Cardiac septum (tissue), 1 donor: ENCODE measurements at regions of chr18 and their contacts with region 1.

Region 1: DNA sequence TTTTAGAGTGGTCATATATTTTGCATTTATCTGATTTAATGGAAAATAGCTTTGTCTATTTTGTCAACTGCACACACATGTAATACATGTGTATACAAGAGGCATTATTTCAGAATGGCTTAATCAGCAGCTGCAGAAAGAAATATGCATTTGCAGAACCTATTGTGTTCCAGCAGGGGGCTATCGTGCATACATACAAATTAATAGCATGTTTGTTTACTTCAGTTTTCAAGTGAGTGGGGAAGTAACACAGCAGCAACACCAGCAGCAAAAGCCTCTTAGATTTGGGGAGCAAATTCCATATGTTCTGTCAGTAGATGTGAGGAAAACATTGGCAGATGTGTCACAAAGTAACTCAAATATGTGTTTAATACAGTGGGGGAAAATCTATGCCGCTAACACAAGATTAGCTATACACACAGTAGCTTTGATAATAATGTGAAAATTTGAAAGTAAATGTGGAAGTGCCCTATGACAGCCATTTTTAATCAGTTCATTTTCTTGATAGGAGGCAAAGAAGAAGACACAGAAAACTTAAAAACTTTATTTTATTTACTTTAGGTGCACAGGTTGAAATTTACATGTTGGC is 218.1 kb downstream of the WDR7 start:
- DNase-seq: no peak

Region 2: DNA sequence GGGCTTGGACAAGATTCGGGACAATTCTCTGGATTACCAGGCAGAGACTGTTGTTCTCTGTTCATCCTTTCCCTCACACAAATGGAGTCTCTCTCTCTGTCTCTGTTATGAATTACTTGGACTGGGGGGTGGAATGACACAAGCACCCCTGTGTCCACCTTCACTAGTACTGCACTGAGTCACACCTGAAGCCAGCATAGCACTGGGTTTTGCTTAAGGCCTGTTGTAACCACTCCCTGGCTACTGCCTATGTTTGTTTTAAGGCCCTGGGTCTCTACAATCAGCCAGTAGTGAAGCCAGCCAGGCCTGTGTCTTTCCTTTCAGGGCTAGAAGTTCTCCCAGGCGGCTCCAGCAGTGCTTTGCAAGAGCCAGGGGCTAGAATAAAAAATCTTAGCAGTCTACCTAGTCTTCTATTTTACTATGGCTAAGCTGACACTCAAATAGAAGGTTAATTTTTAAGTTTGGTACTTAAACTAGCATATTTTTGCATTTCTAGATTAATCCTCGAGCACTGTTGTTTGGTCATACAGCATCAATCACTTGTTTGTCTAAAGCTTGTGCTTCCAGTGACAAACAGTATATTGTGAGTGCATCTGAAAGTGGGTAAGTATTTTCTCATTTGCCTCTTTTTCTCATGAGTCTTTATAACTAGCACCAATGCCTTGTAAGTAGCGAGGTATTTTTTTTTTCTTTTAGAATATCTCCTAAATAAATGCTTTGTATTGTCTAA is 190.3 kb before region 1 on chr18:
- intact Hi-C with region 1: no loop called
- DNase-seq: no peak

Region 3: DNA sequence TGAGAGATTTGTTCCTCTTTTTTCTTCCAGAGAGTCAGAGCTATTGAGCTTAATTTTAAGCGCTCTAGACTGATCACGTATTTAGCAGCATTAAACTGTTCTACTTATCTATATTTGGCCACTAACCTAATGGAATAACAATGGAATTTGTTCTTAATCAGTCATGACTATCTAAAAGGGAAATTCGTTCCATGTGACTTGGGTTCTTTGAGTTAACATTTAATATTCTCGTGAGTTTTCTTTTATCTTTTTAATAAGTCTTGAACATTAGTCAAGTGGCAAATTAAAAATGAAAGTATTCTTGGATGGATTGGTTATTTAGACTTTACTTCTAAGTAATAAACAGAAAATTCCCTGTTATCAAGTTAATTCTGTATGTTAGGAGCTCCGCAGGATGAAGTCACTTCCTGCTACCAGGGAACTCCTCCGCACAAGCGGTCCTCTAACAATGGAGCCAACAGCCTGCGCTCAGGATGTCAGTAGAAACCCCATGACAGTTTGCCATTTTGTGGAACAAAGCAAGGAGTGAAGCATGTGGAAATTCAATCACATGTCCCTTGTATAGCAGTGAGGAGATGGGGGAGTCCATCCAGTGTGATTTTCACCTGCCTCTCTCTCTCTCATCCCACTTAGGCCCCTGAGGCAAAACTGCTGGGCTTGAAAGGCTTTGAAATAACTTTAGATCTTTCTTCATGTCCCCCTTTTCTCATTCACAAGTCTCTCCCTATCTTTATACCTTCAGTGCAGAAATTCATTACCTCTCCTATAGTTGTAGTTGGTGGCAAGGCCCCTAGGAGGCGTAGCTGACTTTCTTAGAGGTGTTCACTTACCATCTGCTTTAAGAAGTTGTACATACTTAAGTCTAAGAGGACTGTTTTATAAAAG is 80.0 kb before region 1 on chr18:
- intact Hi-C with region 1: no loop called
- DNase-seq: no peak

Region 4: GRCh38 chr18:56982766-56983165 is 113.5 kb after region 1 on chr18:
- intact Hi-C with region 1: no loop called
- DNase-seq: no peak

Region 5: GRCh38 chr18:57446322-57446721 is 577.0 kb after region 1 on chr18:
- intact Hi-C with region 1: loop called (anchors 10 kb)
- DNase-seq: no peak